Natural killer cell (primary cell): ENCODE measurements at regions of chr12 and their contacts with region 1.

Region 1: DNA sequence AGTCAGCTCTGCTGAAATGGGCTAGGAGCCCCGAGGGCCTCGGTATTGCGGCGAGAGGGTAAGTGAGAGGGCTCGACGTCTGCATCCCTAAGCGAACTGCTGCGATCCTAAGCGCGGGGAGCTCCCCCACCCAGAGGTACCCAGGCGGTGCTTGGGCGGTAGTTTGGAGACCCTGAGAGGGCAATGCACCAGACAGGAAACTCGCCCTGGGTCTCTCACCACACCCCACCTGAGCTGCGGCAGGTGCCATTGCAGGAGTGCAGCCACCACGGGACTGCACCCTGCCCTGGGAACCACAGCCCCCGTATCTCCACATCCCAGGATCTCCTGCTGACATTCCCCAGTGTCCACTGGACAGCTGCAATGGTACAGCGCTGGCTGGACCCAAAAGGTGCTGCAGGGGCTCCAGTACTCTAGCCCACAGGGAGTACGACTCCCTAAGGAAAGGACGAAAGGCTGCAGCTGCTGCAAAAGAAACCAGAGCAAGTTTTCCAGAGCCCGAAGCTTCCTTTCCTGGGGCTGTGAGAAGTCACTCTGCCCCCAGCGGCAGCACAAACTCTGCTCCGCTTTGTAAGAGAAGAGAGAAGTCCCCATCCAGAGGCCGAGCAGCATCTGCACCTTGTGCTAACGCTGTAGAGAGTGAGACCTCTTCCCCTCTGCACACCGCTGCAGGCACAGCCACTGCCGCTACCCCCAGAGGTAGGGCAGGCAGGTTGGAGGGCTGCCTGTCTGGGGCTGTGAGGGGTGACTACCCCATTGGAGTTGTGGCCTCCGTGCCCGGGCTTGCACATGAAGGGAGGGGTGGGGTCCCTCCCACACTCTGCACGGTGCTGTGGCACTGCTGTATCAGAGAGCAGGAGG is 31.1 kb upstream of the MON2 start:
- DNase-seq: peak in 1 of 2 donors; percentile 55
- ATAC-seq: peak; percentile 61 to 72 (median 62)
- H3K4me3 ChIP-seq: peak overlapping the region; percentile 21
- H3K4me3 Mint-ChIP-seq: peak overlapping the region; percentile 87
- H3K27ac ChIP-seq: no peak overlapping the region
- H3K27ac Mint-ChIP-seq: no peak overlapping the region
- H3K4me1 ChIP-seq: peaks cover 15% of the 10 kb centered on the region
- H3K4me1 Mint-ChIP-seq: peaks cover 15 to 20% of the 10 kb centered on the region in 2 donors
- H3K27me3 ChIP-seq: peaks cover 9% of the 10 kb centered on the region
- H3K27me3 Mint-ChIP-seq: peaks cover 36 to 68% of the 10 kb centered on the region in 2 donors
- CTCF ChIP-seq: peak; percentile 14

Region 2: GRCh38 chr12:62522984-62523383 is 87.5 kb after region 1 on chr12:
- intact Hi-C with region 1: no loop called
- DNase-seq: peak in 1 of 2 donors; percentile 22
- ATAC-seq: peak in 1 of 3 donors; percentile 57
- H3K4me3 ChIP-seq: no peak overlapping the region
- H3K4me3 Mint-ChIP-seq: no peak overlapping the region
- H3K27ac ChIP-seq: no peak overlapping the region
- H3K27ac Mint-ChIP-seq: no peak overlapping the region
- H3K4me1 ChIP-seq: no peaks in the 10 kb centered on the region
- H3K4me1 Mint-ChIP-seq: peaks cover 18 to 20% of the 10 kb centered on the region in 2 donors
- H3K27me3 ChIP-seq: no peaks in the 10 kb centered on the region
- H3K27me3 Mint-ChIP-seq: no peaks in the 10 kb centered on the region
- CTCF ChIP-seq: no peak

Region 3: GRCh38 chr12:62581288-62582064 is 145.9 kb after region 1 on chr12:
- intact Hi-C with region 1: loop called (anchors 10 kb)
- DNase-seq: peak in 1 of 2 donors; percentile 70
- ATAC-seq: peak; percentile 46 to 72 (median 62)
- H3K4me3 ChIP-seq: no peak overlapping the region
- H3K4me3 Mint-ChIP-seq: no peak overlapping the region
- H3K27ac ChIP-seq: no peak overlapping the region
- H3K27ac Mint-ChIP-seq: no peak overlapping the region
- H3K4me1 ChIP-seq: no peaks in the 10 kb centered on the region
- H3K4me1 Mint-ChIP-seq: no peaks in the 10 kb centered on the region
- H3K27me3 ChIP-seq: no peaks in the 10 kb centered on the region
- H3K27me3 Mint-ChIP-seq: no peaks in the 10 kb centered on the region
- CTCF ChIP-seq: peak; percentile 65

Region 4: GRCh38 chr12:62793256-62794217 is 358.0 kb after region 1 on chr12:
- intact Hi-C with region 1: loop called (anchors 1 kb)
- DNase-seq: peak; percentile 65 to 81
- ATAC-seq: peak; percentile 77 to 81 (median 77)
- H3K4me3 ChIP-seq: no peak overlapping the region
- H3K4me3 Mint-ChIP-seq: no peak overlapping the region
- H3K27ac ChIP-seq: no peak overlapping the region
- H3K27ac Mint-ChIP-seq: no peak overlapping the region
- H3K4me1 ChIP-seq: no peaks in the 10 kb centered on the region
- H3K4me1 Mint-ChIP-seq: no peaks in the 10 kb centered on the region
- H3K27me3 ChIP-seq: no peaks in the 10 kb centered on the region
- H3K27me3 Mint-ChIP-seq: no peaks in the 10 kb centered on the region
- CTCF ChIP-seq: peak; percentile 97

Region 5: GRCh38 chr12:62799126-62799736 is 363.7 kb after region 1 on chr12:
- intact Hi-C with region 1: loop called (anchors 1 kb)
- DNase-seq: peak in 1 of 2 donors; percentile 78
- ATAC-seq: peak in 2 of 3 donors; percentile 82 to 85
- H3K4me3 ChIP-seq: no peak overlapping the region
- H3K4me3 Mint-ChIP-seq: no peak overlapping the region
- H3K27ac ChIP-seq: no peak overlapping the region
- H3K27ac Mint-ChIP-seq: no peak overlapping the region
- H3K4me1 ChIP-seq: no peaks in the 10 kb centered on the region
- H3K4me1 Mint-ChIP-seq: no peaks in the 10 kb centered on the region
- H3K27me3 ChIP-seq: no peaks in the 10 kb centered on the region
- H3K27me3 Mint-ChIP-seq: no peaks in the 10 kb centered on the region
- CTCF ChIP-seq: peak; percentile 90